PC-3 (cell line): ENCODE measurements at regions of chr6 and their contacts with region 1.

Region 1: GRCh38 chr6:155174576-155175211 is 89.1 kb upstream of the CLDN20 start:
- DNase-seq: peak; percentile 79
- ATAC-seq: peak; percentile 73
- H3K4me3 ChIP-seq: no peak overlapping the region
- H3K27ac ChIP-seq: no peak overlapping the region
- H3K4me1 ChIP-seq: peaks cover 22% of the 10 kb centered on the region
- H3K27me3 ChIP-seq: no peaks in the 10 kb centered on the region
- CTCF ChIP-seq: peak; percentile 78

Region 2: DNA sequence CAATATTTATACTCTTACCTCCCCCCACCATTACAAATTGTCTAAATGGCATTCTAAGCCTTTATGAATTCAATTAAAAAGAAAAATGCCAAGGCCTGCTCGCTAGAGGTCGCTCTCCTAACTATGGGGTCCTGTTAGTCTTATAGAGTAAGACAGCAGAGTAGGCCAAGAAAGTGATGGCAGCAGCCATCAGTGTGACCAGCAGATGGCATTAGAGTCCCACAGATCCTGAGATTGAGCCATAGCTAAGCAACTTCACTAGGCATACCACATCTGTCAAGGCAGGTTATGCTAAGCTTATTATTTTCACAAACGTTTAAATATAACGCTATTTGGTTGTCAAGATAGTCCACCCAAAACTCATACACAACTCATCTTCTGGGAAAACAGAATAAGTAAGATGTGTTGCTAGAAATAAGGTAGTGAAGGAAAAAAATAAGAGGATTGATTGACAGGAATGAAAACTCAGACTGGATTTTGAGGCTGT is 499.0 kb before region 1 on chr6:
- CTCF ChIA-PET with region 1: no interaction called
- POLR2A ChIA-PET with region 1: no interaction called
- intact Hi-C with region 1: loop called (anchors 1 kb)
- DNase-seq: peak; percentile 96
- ATAC-seq: peak; percentile 99
- H3K4me3 ChIP-seq: no peak overlapping the region
- H3K27ac ChIP-seq: no peak overlapping the region
- H3K4me1 ChIP-seq: no peaks in the 10 kb centered on the region
- H3K27me3 ChIP-seq: no peaks in the 10 kb centered on the region
- CTCF ChIP-seq: peak; percentile 99

Region 3: GRCh38 chr6:154928325-154928922 is 246.3 kb before region 1 on chr6:
- CTCF ChIA-PET with region 1: no interaction called
- POLR2A ChIA-PET with region 1: no interaction called
- intact Hi-C with region 1: loop called (anchors 1 kb)
- DNase-seq: peak; percentile 76
- ATAC-seq: peak; percentile 21; the same call in 1 of the 2 replicates
- H3K4me3 ChIP-seq: no peak overlapping the region
- H3K27ac ChIP-seq: no peak overlapping the region
- H3K4me1 ChIP-seq: peaks cover 19% of the 10 kb centered on the region
- H3K27me3 ChIP-seq: no peaks in the 10 kb centered on the region
- CTCF ChIP-seq: peak; percentile 81

Region 4: DNA sequence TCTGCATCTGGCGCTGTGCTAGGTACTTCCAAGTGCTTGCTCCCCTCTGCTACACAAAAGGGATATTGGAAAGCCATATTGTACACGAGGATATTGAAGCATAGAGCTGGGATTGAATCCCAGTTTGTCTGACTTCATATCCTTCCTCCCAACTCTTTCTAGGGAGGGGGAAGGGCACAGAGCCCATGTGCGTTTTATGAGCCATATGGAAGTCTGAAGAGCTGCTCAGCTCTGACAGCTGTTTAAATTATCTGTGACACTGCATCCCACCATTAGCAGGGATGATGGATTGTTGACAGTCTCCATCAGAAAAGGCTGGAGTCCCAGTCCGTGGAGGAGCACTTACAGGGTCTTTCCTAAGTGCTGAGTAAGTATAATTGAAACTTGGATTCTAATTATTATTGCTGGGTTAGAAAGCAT is 161.2 kb before region 1 on chr6:
- CTCF ChIA-PET with region 1: no interaction called
- POLR2A ChIA-PET with region 1: no interaction called
- intact Hi-C with region 1: loop called (anchors 2 kb)
- DNase-seq: no peak
- ATAC-seq: peak; percentile 27; the same call in 1 of the 2 replicates
- H3K4me3 ChIP-seq: no peak overlapping the region
- H3K27ac ChIP-seq: no peak overlapping the region
- H3K4me1 ChIP-seq: peaks cover 23% of the 10 kb centered on the region
- H3K27me3 ChIP-seq: no peaks in the 10 kb centered on the region
- CTCF ChIP-seq: no peak

Region 5: DNA sequence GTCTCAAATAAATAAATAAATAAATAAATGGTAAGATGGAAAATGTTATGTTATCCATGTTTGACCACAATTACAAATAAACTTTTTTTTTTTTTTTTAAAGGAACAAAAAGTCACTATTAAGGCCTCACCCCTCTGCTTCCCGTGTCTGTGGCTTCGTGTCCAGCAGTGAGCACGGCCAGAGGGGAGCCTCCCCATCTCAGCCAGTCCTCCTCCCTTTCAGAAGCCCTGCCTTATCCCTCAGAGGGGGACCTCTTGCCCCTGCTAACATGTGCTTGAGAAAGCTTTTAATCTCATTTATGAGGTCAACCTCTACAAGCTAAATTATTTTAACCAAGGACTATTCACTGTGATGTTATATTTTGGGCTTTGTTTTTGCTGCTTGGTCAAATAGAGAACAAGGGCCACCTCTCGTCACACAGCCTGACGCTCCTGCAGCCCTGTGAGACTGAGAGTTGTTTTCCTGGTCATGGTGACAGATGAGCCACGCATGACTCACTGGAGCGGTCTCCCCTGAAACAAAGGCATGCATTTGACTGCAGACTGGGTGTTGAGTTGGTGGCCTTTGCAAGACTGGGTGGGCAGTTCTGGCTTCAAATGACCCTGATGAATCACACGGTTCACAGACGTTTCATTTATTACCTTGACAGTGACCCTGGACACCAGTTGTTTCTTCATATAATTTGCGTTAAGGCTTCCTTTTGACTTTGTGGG is 47.8 kb before region 1 on chr6:
- CTCF ChIA-PET with region 1: no interaction called
- POLR2A ChIA-PET with region 1: no interaction called
- intact Hi-C with region 1: loop called (anchors 2 kb)
- DNase-seq: peak; percentile 81
- ATAC-seq: peak; percentile 99
- H3K4me3 ChIP-seq: peak overlapping the region; percentile 9; the same call in 1 of the 2 replicates
- H3K27ac ChIP-seq: peak overlapping the region; percentile 76
- H3K4me1 ChIP-seq: peaks cover 23% of the 10 kb centered on the region
- H3K27me3 ChIP-seq: no peaks in the 10 kb centered on the region
- CTCF ChIP-seq: no peak

Region 6: DNA sequence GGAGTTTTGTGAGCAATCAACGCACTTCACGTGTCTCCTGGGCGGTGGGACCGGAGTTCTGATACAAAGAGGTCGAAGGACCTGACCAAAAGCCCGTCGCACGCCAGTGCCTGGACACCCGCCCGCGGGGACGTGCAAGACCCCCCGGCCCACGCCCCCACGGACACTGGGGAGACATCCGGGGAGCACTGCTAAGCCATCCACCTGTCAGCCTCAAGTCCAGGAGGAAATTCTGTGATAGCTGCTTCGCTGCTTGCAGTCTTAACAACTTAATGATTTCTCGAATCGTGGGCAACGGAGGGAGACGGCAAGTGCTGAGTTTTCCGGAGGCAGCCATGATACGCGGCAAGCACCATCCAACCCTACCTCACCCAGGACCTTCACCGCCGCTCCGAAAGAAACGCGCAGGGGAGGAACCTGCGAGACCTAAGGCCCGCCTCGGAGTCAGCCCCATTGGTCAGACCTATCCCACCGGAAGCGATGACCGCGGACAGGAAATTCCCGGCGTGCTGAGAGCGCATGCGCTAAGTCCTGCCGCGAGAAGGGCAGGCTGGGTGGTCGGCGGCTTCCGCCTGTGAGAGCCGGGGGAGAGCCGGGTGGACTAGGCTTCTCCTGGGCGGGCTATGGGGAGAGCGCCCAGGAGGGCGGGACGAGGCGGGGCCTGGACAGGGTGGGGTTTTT is 139.5 kb after region 1 on chr6 and contains the start of gene TFB1M:
- CTCF ChIA-PET with region 1: interaction called, 3 read pairs
- POLR2A ChIA-PET with region 1: interaction called, 4 read pairs
- intact Hi-C with region 1: loop called (anchors 2 kb)
- DNase-seq: peak; percentile 98
- ATAC-seq: peak; percentile 92
- H3K4me3 ChIP-seq: peak within 1 kb of the TSS; percentile 89
- H3K27ac ChIP-seq: peak within 1 kb of the TSS; percentile 84
- H3K4me1 ChIP-seq: peaks cover 38% of the 10 kb centered on the region
- H3K27me3 ChIP-seq: no peaks in the 10 kb centered on the region
- CTCF ChIP-seq: no peak
- total RNA-seq, gene TFB1M: 23.1 and 25.6 TPM in 2 replicates